Heart right ventricle (tissue), 16 donors: ENCODE measurements at regions of chr3 and their contacts with region 1.

Region 1: GRCh38 chr3:123449102-123449996 is 459 bp upstream of the ADCY5 start:
- DNase-seq: peak; percentile 32 to 60
- ATAC-seq: peak; percentile 36 to 78 (median 54)
- H3K4me3 ChIP-seq: peak overlapping the region; percentile 56 to 81 (median 72)
- H3K27ac ChIP-seq: peak overlapping the region; percentile 81 to 97 (median 91)
- H3K4me1 ChIP-seq: peaks cover 0 to 35% (median 19%) of the 10 kb centered on the region in 9 donors
- H3K27me3 ChIP-seq: peaks cover 0 to 75% (median 27%) of the 10 kb centered on the region in 7 donors
- CTCF ChIP-seq: no peak

Region 2: DNA sequence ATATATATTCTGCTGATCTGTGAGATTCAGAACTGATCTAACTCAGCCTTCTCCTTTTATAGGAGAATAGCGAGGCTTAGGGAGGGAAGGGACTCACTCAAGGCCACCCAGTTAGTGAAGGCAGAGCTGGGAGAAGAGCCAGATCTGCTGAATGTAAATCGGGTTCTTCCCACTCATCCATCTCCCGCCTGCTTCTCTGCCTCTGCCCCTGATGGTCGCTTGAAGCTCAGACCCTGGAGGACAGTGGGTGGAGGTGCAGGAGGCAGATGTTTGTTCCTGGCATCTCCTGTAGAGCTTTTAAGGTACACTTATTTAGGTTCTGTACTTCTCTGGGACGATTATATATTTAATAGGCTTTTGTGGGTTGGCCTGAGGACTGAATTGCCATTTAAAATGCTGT is 378.2 kb before region 1 on chr3:
- intact Hi-C with region 1: no loop called
- DNase-seq: no peak
- ATAC-seq: no peak
- H3K4me3 ChIP-seq: no peak overlapping the region
- H3K27ac ChIP-seq: peak overlapping the region in 2 of 10 donors; percentile 28 to 48
- H3K4me1 ChIP-seq: peaks cover 7 to 54% (median 40%) of the 10 kb centered on the region in 9 donors
- H3K27me3 ChIP-seq: no peaks in the 10 kb centered on the region
- CTCF ChIP-seq: peak in 1 of 9 donors; percentile 6

Region 3: DNA sequence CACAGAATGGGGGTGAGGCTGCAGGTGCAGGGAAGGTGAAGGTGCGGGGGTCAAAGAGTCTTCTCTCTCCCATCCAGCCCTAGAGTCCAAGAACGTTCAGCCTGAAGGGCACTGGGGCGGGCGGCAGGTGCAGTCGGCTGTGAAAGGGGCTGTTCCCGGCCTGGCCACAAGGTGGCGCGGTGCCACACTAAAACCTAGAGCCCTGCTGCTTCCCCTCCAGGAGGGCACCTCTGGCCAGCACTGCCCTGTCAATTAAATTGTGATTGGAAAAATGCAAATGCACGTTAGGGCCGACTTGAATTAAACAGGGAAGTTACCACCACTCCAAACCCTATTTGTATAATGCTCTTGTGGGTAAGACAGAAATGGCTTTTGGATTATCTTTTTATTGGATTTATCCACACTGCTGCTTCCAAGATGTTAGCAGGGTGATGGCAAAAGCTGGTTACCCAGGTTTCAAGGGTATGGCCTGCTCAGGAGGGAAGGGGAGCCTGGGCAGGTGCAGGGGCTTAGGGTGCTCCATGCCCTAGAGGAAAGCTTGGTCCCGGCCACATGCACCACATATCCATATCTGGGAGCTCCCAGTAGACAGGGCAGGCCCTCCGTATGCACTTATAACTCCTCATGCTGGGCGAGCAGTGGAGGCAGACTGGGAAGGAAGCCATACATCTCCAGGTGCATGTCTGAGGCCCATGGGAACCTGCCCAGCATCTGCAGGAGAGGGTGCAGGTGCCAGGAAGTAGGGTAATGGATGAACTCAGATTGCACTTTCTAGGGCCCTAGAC is 120.3 kb before region 1 on chr3:
- intact Hi-C with region 1: loop called in 6 of 10 experiments (anchors 2 to 5 kb)
- DNase-seq: peak; percentile 80 to 84
- ATAC-seq: peak; percentile 39 to 66 (median 58)
- H3K4me3 ChIP-seq: no peak overlapping the region
- H3K27ac ChIP-seq: peak overlapping the region in 8 of 10 donors; percentile 72 to 96 (median 92)
- H3K4me1 ChIP-seq: peaks cover 15 to 91% (median 52%) of the 10 kb centered on the region in 9 donors
- H3K27me3 ChIP-seq: no peaks in the 10 kb centered on the region
- CTCF ChIP-seq: peak; percentile 87 to 97 (median 93)

Region 4: GRCh38 chr3:123375014-123375940 is 74.1 kb before region 1 on chr3:
- intact Hi-C with region 1: loop called in 2 of 10 experiments (anchors 5 kb)
- DNase-seq: peak in 1 of 2 donors; percentile 48
- ATAC-seq: peak in 7 of 8 donors; percentile 9 to 64 (median 50)
- H3K4me3 ChIP-seq: no peak overlapping the region
- H3K27ac ChIP-seq: peak overlapping the region; percentile 47 to 95 (median 84)
- H3K4me1 ChIP-seq: peaks cover 20 to 97% (median 77%) of the 10 kb centered on the region in 9 donors
- H3K27me3 ChIP-seq: no peaks in the 10 kb centered on the region
- CTCF ChIP-seq: peak in 1 of 9 donors; percentile 17

Region 5: GRCh38 chr3:123412811-123413604 is 36.3 kb before region 1 on chr3:
- intact Hi-C with region 1: loop called in 4 of 10 experiments (anchors 5 kb)
- DNase-seq: peak; percentile 56 to 68
- ATAC-seq: peak; percentile 59 to 91 (median 84)
- H3K4me3 ChIP-seq: peak overlapping the region in 5 of 10 donors; percentile 0 to 29 (median 17)
- H3K27ac ChIP-seq: peak overlapping the region; percentile 32 to 92 (median 86)
- H3K4me1 ChIP-seq: peaks cover 36 to 99% (median 78%) of the 10 kb centered on the region in 9 donors
- H3K27me3 ChIP-seq: no peaks in the 10 kb centered on the region
- CTCF ChIP-seq: peak in 2 of 9 donors; percentile 14 to 21

Region 6: GRCh38 chr3:123546133-123546755 is 96.9 kb after region 1 on chr3:
- intact Hi-C with region 1: loop called in 2 of 10 experiments (anchors 10 kb)
- DNase-seq: no peak
- ATAC-seq: no peak
- H3K4me3 ChIP-seq: no peak overlapping the region
- H3K27ac ChIP-seq: no peak overlapping the region
- H3K4me1 ChIP-seq: peaks cover 0 to 15% (median 5%) of the 10 kb centered on the region in 9 donors
- H3K27me3 ChIP-seq: no peaks in the 10 kb centered on the region
- CTCF ChIP-seq: no peak